CD8-positive, alpha-beta T cell (primary cell): ENCODE measurements at regions of chr7 and their contacts with region 1.

Region 1: DNA sequence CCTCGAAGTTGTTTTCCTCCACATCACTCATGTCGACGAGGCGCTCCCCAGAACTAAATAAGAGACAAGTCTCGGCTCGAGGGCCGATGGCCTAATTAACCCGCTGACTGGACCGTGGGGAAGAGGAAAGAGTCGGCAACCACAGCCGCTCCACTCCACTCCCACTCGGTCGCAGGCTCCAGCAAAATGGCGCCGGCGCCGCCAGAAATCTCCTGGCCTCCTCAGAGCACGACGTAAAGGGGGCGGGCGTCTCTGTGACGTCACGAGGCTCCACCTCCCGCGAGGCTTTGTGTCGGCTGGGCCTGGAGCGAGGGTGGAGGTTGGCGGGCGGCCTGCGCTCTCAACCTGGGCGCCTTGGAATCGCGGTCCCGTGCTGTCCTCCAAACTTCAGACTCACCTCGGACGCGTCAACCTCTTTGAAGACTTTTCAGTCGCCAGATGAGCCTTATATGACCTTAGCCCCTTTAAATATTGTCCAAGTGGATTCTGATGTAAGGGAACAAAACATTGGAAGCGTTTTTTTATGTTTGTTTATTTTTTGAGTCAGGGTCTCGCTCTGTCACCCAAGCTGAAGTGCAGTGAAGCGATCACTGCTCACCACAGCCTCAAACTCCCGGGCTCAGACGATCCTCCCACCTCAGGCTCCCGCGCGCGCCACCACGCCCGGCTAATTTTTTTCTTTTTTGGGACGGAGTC is at the start of gene TRA2A:
- DNase-seq: peak; percentile 93 to 98 (median 97)
- ATAC-seq: peak; percentile 89
- H3K4me3 ChIP-seq: peak within 1 kb of the TSS; percentile 94 to 100
- H3K4me3 Mint-ChIP-seq: peak within 1 kb of the TSS; percentile 99
- H3K27ac ChIP-seq: peak within 1 kb of the TSS; percentile 97 to 100
- H3K27ac Mint-ChIP-seq: peak within 1 kb of the TSS; percentile 100
- H3K4me1 ChIP-seq: peaks cover 31% of the 10 kb centered on the region
- H3K4me1 Mint-ChIP-seq: peaks cover 42% of the 10 kb centered on the region
- H3K27me3 ChIP-seq: no peaks in the 10 kb centered on the region
- H3K27me3 Mint-ChIP-seq: no peaks in the 10 kb centered on the region
- CTCF ChIP-seq: no peak
- total RNA-seq, gene TRA2A: 258 to 271 TPM

Region 2: DNA sequence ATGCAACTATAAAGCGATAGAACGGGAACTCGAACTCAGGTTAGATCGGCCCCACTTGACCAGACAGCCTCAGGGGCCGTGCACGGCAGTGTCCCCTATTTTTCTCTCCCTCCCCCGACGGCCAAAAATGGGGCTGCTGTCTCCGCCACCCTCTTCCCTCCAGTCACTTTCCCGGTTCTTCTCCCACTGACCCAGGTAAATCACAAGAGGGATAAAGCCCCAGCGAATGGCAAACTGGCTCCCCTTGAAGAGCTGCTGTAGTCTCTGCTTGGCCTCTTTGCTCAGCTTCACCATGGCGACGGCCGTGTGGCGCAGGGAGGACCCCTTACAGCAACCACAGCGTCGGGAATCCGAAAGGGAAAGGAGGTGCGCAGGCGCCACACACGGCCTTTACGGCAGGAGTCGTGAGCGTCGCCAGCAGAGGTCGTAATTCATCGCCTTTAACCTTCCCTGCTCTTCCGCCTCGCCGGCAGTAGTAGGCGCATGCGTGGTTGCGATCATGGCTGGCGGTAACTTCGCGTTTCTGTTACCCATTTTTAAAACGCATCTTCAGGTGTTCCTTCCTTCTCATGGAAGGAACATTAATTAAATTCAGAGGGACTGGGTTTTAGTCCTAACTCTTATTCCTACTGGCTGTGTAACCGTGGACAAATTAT is 709.3 kb before region 1 on chr7 and contains the start of gene TOMM7:
- CTCF ChIA-PET with region 1: no interaction called
- POLR2A ChIA-PET with region 1: no interaction called
- intact Hi-C with region 1: loop called (anchors 2 to 10 kb)
- DNase-seq: peak; percentile 72 to 99 (median 86)
- ATAC-seq: peak; percentile 96
- H3K4me3 ChIP-seq: peak within 1 kb of the TSS; percentile 74 to 89
- H3K4me3 Mint-ChIP-seq: peak within 1 kb of the TSS; percentile 99
- H3K27ac ChIP-seq: peak within 1 kb of the TSS; percentile 85
- H3K27ac Mint-ChIP-seq: peak within 1 kb of the TSS; percentile 99
- H3K4me1 ChIP-seq: peaks cover 20% of the 10 kb centered on the region
- H3K4me1 Mint-ChIP-seq: peaks cover 41% of the 10 kb centered on the region
- H3K27me3 ChIP-seq: no peaks in the 10 kb centered on the region
- H3K27me3 Mint-ChIP-seq: peaks cover 4% of the 10 kb centered on the region
- CTCF ChIP-seq: no peak
- total RNA-seq, gene TOMM7: 595 to 610 TPM

Region 3: DNA sequence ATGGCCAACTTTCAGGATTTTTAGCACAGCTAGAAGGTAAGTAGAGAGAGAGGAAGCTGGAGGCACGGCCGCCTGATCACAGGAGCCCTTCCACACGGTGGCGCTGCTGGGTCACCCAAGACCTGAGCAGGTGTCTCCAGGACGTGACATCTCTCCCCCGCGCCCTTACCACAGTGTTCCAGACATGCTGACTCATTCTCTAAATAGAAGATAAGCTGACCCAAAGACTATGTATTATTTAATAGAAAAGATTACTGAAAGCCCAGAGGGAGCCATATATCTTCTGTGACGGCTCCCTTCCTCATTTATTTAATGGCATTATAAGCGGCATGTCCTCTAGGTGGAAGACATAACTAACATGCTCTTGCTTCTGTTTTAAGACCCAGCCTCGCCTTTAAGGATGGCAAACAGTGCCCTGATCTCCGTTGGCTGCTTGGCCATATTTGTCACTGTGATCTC is 258.8 kb before region 1 on chr7:
- CTCF ChIA-PET with region 1: interaction called, 3 read pairs
- POLR2A ChIA-PET with region 1: no interaction called
- intact Hi-C with region 1: loop called in 1 of 2 experiments (anchors 5 kb)
- DNase-seq: peak; percentile 78 to 91 (median 89)
- ATAC-seq: peak; percentile 97
- H3K4me3 ChIP-seq: peak overlapping the region in 1 of 2 experiments; percentile 16
- H3K4me3 Mint-ChIP-seq: peak overlapping the region; percentile 70
- H3K27ac ChIP-seq: no peak overlapping the region
- H3K27ac Mint-ChIP-seq: no peak overlapping the region
- H3K4me1 ChIP-seq: no peaks in the 10 kb centered on the region
- H3K4me1 Mint-ChIP-seq: peaks cover 4% of the 10 kb centered on the region
- H3K27me3 ChIP-seq: no peaks in the 10 kb centered on the region
- H3K27me3 Mint-ChIP-seq: peaks cover 6% of the 10 kb centered on the region
- CTCF ChIP-seq: peak; percentile 82

Region 4: GRCh38 chr7:23474094-23474828 is 57.7 kb before region 1 on chr7:
- CTCF ChIA-PET with region 1: no interaction called
- POLR2A ChIA-PET with region 1: interaction called, 4 read pairs
- intact Hi-C with region 1: loop called in 1 of 2 experiments (anchors 5 kb)
- DNase-seq: peak in 6 of 9 experiments; percentile 21 to 59 (median 41)
- ATAC-seq: no peak
- H3K4me3 ChIP-seq: no peak overlapping the region
- H3K4me3 Mint-ChIP-seq: no peak overlapping the region
- H3K27ac ChIP-seq: no peak overlapping the region
- H3K27ac Mint-ChIP-seq: no peak overlapping the region
- H3K4me1 ChIP-seq: peaks cover 30% of the 10 kb centered on the region
- H3K4me1 Mint-ChIP-seq: peaks cover 27% of the 10 kb centered on the region
- H3K27me3 ChIP-seq: peaks cover 72 to 84% of the 10 kb centered on the region in 2 experiments
- H3K27me3 Mint-ChIP-seq: peaks cover 65% of the 10 kb centered on the region
- CTCF ChIP-seq: no peak

Region 5: DNA sequence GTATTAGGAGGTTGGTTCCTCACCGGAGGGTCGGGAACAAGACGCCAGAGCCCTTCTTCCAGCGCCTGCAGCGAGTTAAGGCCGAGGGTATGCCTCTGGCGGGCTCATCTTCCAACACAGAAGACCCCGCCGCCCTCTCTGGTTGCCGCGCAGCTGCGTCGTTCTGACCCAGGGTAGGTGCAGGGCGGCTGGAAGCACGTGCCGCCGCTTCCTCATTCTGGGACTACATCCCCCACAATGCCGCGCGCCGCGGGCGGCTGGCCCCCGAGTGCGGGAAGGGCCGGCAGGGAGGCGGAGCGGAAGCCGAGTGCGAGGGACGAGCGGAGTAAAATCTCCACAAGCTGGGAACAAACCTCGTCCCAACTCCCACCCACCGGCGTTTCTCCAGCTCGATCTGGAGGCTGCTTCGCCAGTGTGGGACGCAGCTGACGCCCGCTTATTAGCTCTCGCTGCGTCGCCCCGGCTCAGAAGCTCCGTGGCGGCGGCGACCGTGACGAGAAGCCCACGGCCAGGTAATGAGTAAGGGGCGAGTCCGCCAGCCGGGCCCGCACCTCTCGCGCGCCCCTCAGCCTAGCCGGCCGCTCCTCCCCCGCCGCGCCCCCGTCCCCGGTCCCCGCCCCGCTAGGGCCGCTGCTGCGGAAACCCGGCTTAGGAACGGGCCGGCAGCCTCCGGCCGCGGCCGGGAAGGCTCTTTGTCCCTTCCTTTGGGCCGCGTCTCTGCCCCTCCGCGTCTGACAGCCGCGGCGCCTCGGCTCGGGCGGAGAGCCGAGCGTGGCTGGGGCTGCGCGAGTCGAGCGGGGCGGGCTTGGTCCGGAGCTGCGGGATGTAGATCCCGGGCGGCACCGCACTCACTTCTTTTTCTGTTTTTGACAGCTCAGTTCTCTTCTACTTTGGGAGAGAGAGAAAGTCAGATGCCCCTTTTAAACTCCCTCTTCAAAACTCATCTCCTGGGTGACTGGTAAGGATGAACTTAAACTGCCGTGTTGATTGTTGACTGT is 65.5 kb after region 1 on chr7 and contains the start of gene CCDC126:
- CTCF ChIA-PET with region 1: no interaction called
- POLR2A ChIA-PET with region 1: no interaction called
- intact Hi-C with region 1: loop called (anchors 1 to 5 kb)
- DNase-seq: peak; percentile 57 to 88 (median 81)
- ATAC-seq: peak; percentile 89
- H3K4me3 ChIP-seq: peak within 1 kb of the TSS; percentile 81 to 91
- H3K4me3 Mint-ChIP-seq: peak within 1 kb of the TSS; percentile 85
- H3K27ac ChIP-seq: peak within 1 kb of the TSS; percentile 55 to 63
- H3K27ac Mint-ChIP-seq: peak within 1 kb of the TSS; percentile 49
- H3K4me1 ChIP-seq: peaks cover 21% of the 10 kb centered on the region
- H3K4me1 Mint-ChIP-seq: peaks cover 34% of the 10 kb centered on the region
- H3K27me3 ChIP-seq: no peaks in the 10 kb centered on the region
- H3K27me3 Mint-ChIP-seq: no peaks in the 10 kb centered on the region
- CTCF ChIP-seq: no peak
- total RNA-seq, gene CCDC126: 10.8 to 11.9 TPM

Region 6: GRCh38 chr7:25125137-25125946 is 1593.4 kb after region 1 on chr7 and contains the start of gene CYCS:
- CTCF ChIA-PET with region 1: no interaction called
- POLR2A ChIA-PET with region 1: interaction called, 4 read pairs
- intact Hi-C with region 1: loop called in 1 of 2 experiments (anchors 2 kb)
- DNase-seq: peak; percentile 99 to 100 (median 99)
- ATAC-seq: peak; percentile 92
- H3K4me3 ChIP-seq: peak within 1 kb of the TSS; percentile 84 to 86
- H3K4me3 Mint-ChIP-seq: peak within 1 kb of the TSS; percentile 97
- H3K27ac ChIP-seq: peak within 1 kb of the TSS; percentile 96 to 97
- H3K27ac Mint-ChIP-seq: peak within 1 kb of the TSS; percentile 99
- H3K4me1 ChIP-seq: peaks cover 12% of the 10 kb centered on the region
- H3K4me1 Mint-ChIP-seq: peaks cover 22% of the 10 kb centered on the region
- H3K27me3 ChIP-seq: no peaks in the 10 kb centered on the region
- H3K27me3 Mint-ChIP-seq: no peaks in the 10 kb centered on the region
- CTCF ChIP-seq: no peak
- total RNA-seq, gene CYCS: 135 to 140 TPM